GM13977 (cell line): ENCODE measurements at regions of chr15 and their contacts with region 1.

Region 1: GRCh38 chr15:61871926-61872522 is 188.2 kb downstream of the VPS13C start:
- DNase-seq: peak; percentile 3
- CTCF ChIP-seq: peak; percentile 52

Region 2: GRCh38 chr15:61687124-61687523 is 184.9 kb before region 1 on chr15:
- in situ Hi-C with region 1: no loop called
- DNase-seq: no peak
- CTCF ChIP-seq: no peak

Region 3: GRCh38 chr15:61715082-61715481 is 156.9 kb before region 1 on chr15:
- in situ Hi-C with region 1: no loop called
- DNase-seq: no peak
- CTCF ChIP-seq: no peak

Region 4: GRCh38 chr15:62060113-62060895 is 188.3 kb after region 1 on chr15 and contains the start of gene VPS13C:
- in situ Hi-C with region 1: loop called (anchors 10 kb)
- DNase-seq: peak; percentile 94
- CTCF ChIP-seq: peak; percentile 77